Heart right ventricle (tissue), 16 donors: ENCODE measurements at regions of chr1 and their contacts with region 1.

Region 1: GRCh38 chr1:227437495-227438008 is 119.3 kb upstream of the CDC42BPA start:
- DNase-seq: no peak
- ATAC-seq: peak; percentile 53 to 78 (median 69)
- H3K4me3 ChIP-seq: peak overlapping the region in 9 of 10 donors; percentile 12 to 54 (median 44)
- H3K27ac ChIP-seq: peak overlapping the region in 5 of 10 donors; percentile 30 to 68 (median 56)
- H3K4me1 ChIP-seq: peaks cover 8 to 88% (median 37%) of the 10 kb centered on the region in 9 donors
- H3K27me3 ChIP-seq: no peaks in the 10 kb centered on the region
- CTCF ChIP-seq: peak in 8 of 9 donors; percentile 28 to 79 (median 56)

Region 2: GRCh38 chr1:226912587-226913176 is 524.9 kb before region 1 on chr1:
- intact Hi-C with region 1: loop called in 4 of 10 experiments (anchors 5 to 10 kb)
- DNase-seq: peak; percentile 60 to 66
- ATAC-seq: peak; percentile 69 to 88 (median 83)
- H3K4me3 ChIP-seq: no peak overlapping the region
- H3K27ac ChIP-seq: peak overlapping the region in 1 of 10 donors; percentile 49
- H3K4me1 ChIP-seq: peaks cover 0 to 15% (median 6%) of the 10 kb centered on the region in 9 donors
- H3K27me3 ChIP-seq: no peaks in the 10 kb centered on the region
- CTCF ChIP-seq: peak; percentile 59 to 82 (median 67)

Region 3: DNA sequence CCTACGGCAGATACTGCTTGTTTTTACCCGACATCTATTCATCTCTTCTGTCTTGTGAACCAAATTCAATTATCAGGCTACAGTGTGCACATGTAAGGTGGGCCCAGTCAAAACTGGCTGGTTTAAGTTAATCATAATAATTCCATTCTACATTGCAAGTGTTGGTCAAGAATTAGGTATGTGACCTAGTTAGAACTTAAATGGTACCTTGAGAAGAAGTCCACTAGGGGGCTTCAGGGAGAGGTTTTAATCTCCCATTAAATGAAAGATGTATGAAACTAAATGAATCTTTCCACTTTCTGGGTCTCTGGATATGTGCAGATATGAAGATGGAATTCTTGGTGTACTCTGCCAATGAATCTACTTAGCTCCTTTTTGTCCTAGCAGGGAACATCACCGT is 306.4 kb before region 1 on chr1:
- intact Hi-C with region 1: loop called (anchors 1 to 10 kb)
- DNase-seq: no peak
- ATAC-seq: peak in 3 of 8 donors; percentile 20 to 62 (median 34)
- H3K4me3 ChIP-seq: no peak overlapping the region
- H3K27ac ChIP-seq: no peak overlapping the region
- H3K4me1 ChIP-seq: peaks cover 0 to 13% (median 0%) of the 10 kb centered on the region in 9 donors
- H3K27me3 ChIP-seq: no peaks in the 10 kb centered on the region
- CTCF ChIP-seq: peak; percentile 14 to 66 (median 53)

Region 4: DNA sequence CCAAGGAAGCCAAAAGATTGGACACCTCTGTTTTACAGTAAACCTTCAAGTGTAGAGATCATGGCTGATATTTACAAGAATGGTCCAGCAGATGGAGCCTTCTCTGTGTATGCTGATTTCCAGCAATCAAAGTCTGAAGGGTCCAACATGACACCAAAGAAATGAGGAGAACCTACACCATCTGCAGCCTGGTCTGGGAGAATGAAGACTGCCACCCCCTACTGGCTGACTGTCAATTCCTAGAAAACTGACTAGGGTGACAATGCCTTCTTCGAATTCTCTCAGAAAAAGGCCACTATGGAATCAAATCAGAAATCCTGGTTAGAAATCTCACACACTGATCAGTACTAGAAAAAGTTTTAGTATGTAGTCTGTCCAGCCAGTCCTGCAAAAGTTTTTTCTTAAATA is 202.6 kb before region 1 on chr1:
- intact Hi-C with region 1: loop called in 7 of 10 experiments (anchors 5 to 10 kb)
- DNase-seq: peak in 1 of 2 donors; percentile 27
- ATAC-seq: peak in 7 of 8 donors; percentile 39 to 80 (median 67)
- H3K4me3 ChIP-seq: no peak overlapping the region
- H3K27ac ChIP-seq: no peak overlapping the region
- H3K4me1 ChIP-seq: peaks cover 0 to 42% (median 10%) of the 10 kb centered on the region in 9 donors
- H3K27me3 ChIP-seq: no peaks in the 10 kb centered on the region
- CTCF ChIP-seq: peak in 8 of 9 donors; percentile 26 to 66 (median 50)

Region 5: DNA sequence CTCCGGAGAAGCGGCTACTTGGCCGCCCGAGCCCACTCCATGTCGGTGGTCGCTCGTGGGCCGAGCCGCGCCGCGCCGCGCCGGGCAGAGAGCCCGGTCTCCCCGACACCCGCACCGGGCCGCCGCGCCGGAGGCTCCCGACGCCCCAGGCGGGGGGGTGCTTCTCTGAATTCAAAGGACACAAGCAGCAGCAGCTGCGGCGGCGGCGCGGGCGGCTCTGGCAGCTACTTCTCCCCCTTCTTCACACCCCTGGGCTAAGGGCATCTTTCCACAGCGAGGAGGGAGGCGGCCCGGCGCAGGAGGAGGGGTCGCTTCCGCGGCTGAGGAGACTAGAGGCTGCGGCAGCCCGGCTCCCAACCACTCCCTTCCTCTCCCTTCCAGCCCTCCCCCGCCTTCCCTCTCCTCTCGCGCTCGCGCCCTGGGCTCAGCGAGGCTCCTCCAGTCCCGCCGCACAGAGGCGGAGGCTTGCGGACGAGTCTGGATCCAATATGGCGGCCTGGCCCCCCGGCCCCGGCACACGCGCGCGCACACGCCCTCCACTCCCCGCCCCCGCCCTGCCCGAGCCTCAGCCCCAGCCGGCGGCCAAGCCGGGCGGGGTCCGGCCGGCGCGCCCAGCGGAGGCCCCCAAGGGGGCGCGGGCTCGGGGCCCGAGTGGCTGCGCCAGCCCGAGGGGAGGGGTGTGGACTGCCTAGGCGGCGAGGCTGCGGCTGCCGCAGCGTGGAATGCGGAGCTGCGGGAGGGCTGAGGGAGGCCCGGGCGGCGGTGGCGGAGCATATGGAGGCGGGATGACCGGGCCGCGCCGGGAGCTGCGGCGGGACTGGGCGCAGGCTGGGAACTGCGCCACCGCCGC is 119.3 kb before region 1 on chr1 and contains the start of gene CDC42BPA:
- intact Hi-C with region 1: loop called in 8 of 10 experiments (anchors 2 to 10 kb)
- DNase-seq: peak; percentile 87 to 91
- ATAC-seq: peak; percentile 90 to 95 (median 93)
- H3K4me3 ChIP-seq: peak within 1 kb of the TSS; percentile 78 to 96 (median 86)
- H3K27ac ChIP-seq: peak within 1 kb of the TSS; percentile 90 to 99 (median 98)
- H3K4me1 ChIP-seq: peaks cover 0 to 32% (median 15%) of the 10 kb centered on the region in 9 donors
- H3K27me3 ChIP-seq: peaks cover 0 to 29% (median 0%) of the 10 kb centered on the region in 7 donors
- CTCF ChIP-seq: no peak
- total RNA-seq, gene CDC42BPA: 22.2 to 39.5 (median 31.8) TPM

Region 6: GRCh38 chr1:227388214-227389173 is 49.1 kb before region 1 on chr1:
- intact Hi-C with region 1: no loop called
- DNase-seq: no peak
- ATAC-seq: no peak
- H3K4me3 ChIP-seq: no peak overlapping the region
- H3K27ac ChIP-seq: peak overlapping the region in 1 of 10 donors; percentile 26
- H3K4me1 ChIP-seq: peaks cover 0 to 8% (median 0%) of the 10 kb centered on the region in 9 donors
- H3K27me3 ChIP-seq: no peaks in the 10 kb centered on the region
- CTCF ChIP-seq: no peak